Activated T-helper 1 cell treated with anti-CD3 and anti-CD28 coated beads, Interleukin-12 subunit alpha, Interleukin-12 subunit beta, Interleukin-2, Interleukin-4 antibody, amounts not matched to agents 30 ng/mL and 10 ng/mL and 1 ng/mL, durations not matched to agents 14 hours and 24 hours and 36 hours (primary cell): ENCODE measurements at regions of chr2 and their contacts with region 1.

Region 1: DNA sequence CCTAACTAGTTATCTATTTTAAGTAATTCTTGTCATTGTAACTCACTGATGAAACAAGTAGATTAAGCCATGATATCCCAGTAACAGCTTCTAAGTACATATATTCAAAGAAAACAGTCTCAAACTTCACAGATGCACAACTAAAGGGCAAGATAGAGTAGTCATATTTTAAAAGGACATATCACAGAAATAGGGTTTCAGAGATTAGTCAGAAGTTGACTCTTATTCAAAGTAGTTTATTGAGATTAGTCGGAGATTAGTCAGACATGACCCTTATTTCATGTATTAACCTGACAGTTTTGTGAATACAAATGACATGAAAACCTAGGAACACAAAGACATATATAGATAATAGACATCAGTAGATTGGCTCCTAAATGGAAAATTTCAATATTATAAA is 15.9 kb upstream of the CHAC2 start:
- DNase-seq: no peak
- H3K4me3 Mint-ChIP-seq: no peak overlapping the region
- H3K27ac Mint-ChIP-seq: peak overlapping the region; percentile 20
- H3K4me1 Mint-ChIP-seq: peaks cover 26% of the 10 kb centered on the region
- H3K27me3 Mint-ChIP-seq: no peaks in the 10 kb centered on the region

Region 2: DNA sequence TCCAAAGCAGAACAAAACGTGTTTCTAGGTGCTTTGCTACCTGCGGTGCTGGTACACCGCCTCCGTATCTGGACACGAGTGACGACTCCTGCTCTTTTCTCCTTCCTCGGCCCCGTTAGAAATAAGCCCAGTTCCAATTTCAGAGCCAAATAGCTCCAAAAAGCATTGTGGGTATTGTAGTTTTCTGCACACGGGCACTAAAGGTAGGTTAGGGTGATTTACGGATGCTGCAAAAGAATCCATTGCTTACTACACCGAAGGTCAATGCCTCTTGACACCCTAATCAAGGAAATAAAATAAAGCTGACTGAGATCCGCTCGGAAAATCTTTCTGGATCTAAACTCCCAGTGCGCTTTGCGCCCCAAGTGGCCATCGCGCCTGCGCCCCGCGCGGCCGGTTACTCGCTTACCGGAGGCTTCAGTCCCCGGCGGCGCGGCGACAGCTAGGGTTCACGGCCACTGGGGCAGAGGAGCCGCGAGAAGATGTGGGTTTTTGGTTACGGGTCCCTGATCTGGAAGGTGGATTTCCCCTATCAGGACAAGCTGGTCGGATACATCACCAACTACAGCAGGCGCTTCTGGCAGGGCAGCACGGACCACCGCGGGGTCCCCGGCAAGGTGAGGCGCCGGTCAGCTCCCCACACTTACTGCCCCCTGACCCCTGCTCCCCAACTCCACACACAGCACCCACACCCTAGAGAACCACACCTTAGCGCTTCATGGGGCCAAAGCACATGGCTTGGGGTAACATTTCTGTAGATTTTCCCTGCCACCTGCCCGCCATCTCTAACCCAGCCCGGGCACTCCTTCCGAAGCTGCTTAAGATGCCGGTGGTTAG is 15.9 kb after region 1 on chr2 and contains the start of gene CHAC2:
- intact Hi-C with region 1: loop called (anchors 1 kb)
- DNase-seq: peak; percentile 82
- H3K4me3 Mint-ChIP-seq: peak within 1 kb of the TSS; percentile 96
- H3K27ac Mint-ChIP-seq: peak within 1 kb of the TSS; percentile 97
- H3K4me1 Mint-ChIP-seq: peaks cover 38% of the 10 kb centered on the region
- H3K27me3 Mint-ChIP-seq: no peaks in the 10 kb centered on the region
- total RNA-seq, gene CHAC2: 24.1 and 25.6 TPM in 2 replicates